ENCODE measurements at regions of chr17 and their contacts with region 1.

Region 1: DNA sequence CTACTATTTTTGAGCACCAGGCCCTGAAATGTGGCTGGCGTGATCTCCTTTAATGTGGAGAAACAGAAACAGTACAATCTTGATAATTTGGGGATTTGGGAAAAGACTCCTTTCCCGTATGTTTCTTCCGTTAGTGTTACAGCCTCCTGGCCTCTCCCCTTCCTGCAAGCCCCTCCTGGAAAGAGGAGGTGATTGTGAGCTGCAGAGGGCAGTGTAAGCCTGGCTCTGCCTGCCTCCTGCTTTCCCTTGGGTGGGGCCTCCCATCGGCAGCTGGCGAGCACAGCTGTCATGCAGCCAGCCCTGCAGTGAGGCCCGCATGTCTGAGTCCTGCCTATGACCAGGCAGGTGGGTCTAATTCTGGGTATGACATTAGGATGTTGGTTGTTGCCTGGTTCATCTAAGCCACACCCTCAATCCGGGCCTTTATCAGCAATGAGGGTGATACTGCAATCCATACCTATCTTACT is 48.7 kb upstream of the WSB1 start:
- DNase-seq: peak; percentile 58 to 73
- H3K4me3 ChIP-seq: no peak overlapping the region
- H3K27ac ChIP-seq: no peak overlapping the region
- H3K4me1 ChIP-seq: peaks cover 0 to 9% (median 2%) of the 10 kb centered on the region in 4 experiments; a peak in 3 of 7 replicates
- H3K27me3 ChIP-seq: no peaks in the 10 kb centered on the region
- CTCF ChIP-seq: peak; percentile 85 to 89 (median 88)
- EP300 ChIP-seq: no peak
- POLR2A ChIP-seq: no peak
- RAD21 ChIP-seq: peak; percentile 95 to 97

Region 2: DNA sequence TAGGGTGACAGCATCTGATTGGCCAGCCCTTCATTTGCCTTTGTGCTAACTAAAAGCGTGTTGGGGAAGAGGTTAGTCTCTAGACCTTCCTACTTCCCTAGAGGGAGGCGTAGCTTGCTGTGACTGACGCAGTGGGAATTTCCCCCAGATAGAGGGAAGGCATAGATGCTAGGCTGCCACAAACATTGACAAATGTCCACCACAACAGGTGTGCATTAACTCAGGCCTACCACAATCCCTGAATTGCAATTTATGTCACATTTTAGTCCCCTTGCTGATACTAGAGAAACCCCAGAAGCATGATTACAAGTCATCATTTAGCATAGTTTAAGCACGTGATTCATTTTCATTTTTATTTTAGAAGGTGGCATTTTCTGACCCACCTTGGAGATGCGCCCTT is 27.6 kb before region 1 on chr17:
- CTCF ChIA-PET with region 1: no interaction called
- POLR2A ChIA-PET with region 1: no interaction called
- DNase-seq: no peak
- H3K4me3 ChIP-seq: no peak overlapping the region
- H3K27ac ChIP-seq: no peak overlapping the region
- H3K4me1 ChIP-seq: no peaks in the 10 kb centered on the region
- H3K27me3 ChIP-seq: no peaks in the 10 kb centered on the region
- CTCF ChIP-seq: no peak
- EP300 ChIP-seq: no peak
- POLR2A ChIP-seq: no peak
- RAD21 ChIP-seq: no peak

Region 3: GRCh38 chr17:27276653-27277156 is 31.4 kb after region 1 on chr17:
- CTCF ChIA-PET with region 1: interaction called, 10 read pairs
- POLR2A ChIA-PET with region 1: no interaction called
- DNase-seq: peak; percentile 50 to 77
- H3K4me3 ChIP-seq: peak overlapping the region in 3 of 4 experiments; percentile 2 to 52 (median 50); a peak in 4 of 8 replicates
- H3K27ac ChIP-seq: peak overlapping the region; percentile 93
- H3K4me1 ChIP-seq: peaks cover 0 to 4% (median 2%) of the 10 kb centered on the region in 4 experiments; a peak in 3 of 7 replicates
- H3K27me3 ChIP-seq: no peaks in the 10 kb centered on the region; a peak in 1 of 7 replicates
- CTCF ChIP-seq: no peak
- EP300 ChIP-seq: no peak
- POLR2A ChIP-seq: peak; percentile 57 to 88
- RAD21 ChIP-seq: no peak

Region 4: DNA sequence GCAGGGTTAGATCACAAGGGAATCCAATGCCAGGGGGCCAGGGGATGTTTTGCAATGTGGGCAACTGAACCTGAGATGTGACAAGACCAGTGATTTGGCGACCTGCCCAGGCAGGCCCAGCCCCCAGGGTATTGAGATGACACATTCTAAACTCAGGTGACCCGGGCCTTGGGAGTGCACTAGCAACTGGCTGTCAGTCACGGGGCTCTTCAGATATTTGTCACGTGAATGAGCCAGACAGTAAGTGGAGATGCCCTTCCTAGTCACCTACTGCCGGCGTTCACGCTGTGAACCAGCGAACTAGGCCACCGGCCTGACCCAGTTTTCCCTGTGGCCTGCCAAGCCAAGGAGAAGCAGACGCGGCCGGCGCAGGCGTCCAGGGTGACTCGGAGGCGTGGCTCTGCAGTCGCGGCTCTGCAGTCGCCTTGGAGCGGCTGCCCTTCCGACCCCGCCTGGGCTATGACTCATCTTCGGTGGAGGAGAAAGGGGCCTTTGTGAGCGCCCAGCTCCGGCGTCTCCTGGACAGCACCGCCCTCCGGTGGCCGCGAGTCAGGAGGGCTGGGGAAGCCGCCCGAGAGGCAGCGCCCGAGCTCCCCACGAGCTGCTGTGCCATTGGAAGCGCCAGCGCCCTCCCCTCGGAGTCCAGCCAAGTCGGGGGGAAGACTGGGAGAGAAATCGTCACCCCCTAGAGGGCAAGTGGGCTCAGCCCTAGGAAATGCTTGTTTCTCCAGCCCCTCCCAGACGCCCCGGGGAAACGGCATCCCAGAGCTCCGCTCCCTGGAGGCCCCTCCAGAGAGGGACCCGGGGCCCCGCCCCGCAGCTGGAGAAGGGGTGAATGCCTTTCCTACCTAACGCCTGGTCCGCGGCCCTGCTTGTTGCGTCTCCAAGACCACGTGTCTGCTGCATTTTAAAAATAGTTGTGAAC is 87.5 kb after region 1 on chr17:
- CTCF ChIA-PET with region 1: interaction called, 12 read pairs
- POLR2A ChIA-PET with region 1: interaction called, 4 read pairs
- DNase-seq: peak; percentile 89 to 95
- H3K4me3 ChIP-seq: peak overlapping the region; percentile 14 to 66 (median 56)
- H3K27ac ChIP-seq: peak overlapping the region; percentile 24; the same call in 1 of the 2 replicates
- H3K4me1 ChIP-seq: peaks cover 0 to 6% (median 5%) of the 10 kb centered on the region in 4 experiments; a peak in 6 of 7 replicates
- H3K27me3 ChIP-seq: no peaks in the 10 kb centered on the region; a peak in 1 of 7 replicates
- CTCF ChIP-seq: peak; percentile 65 to 81 (median 75)
- EP300 ChIP-seq: peak in 1 of 2 experiments; percentile 9; a peak in 1 of 3 replicates
- POLR2A ChIP-seq: peak in 1 of 2 experiments; percentile 55; a peak in 2 of 3 replicates
- RAD21 ChIP-seq: peak; percentile 86 to 92

Region 5: GRCh38 chr17:27345141-27345904 is 100.1 kb after region 1 on chr17:
- CTCF ChIA-PET with region 1: interaction called, 10 read pairs
- POLR2A ChIA-PET with region 1: no interaction called
- DNase-seq: peak; percentile 74 to 81
- H3K4me3 ChIP-seq: peak overlapping the region; percentile 28 to 62 (median 41); a peak in 6 of 8 replicates
- H3K27ac ChIP-seq: peak overlapping the region; percentile 95
- H3K4me1 ChIP-seq: peaks cover 8 to 16% (median 12%) of the 10 kb centered on the region in 4 experiments
- H3K27me3 ChIP-seq: no peaks in the 10 kb centered on the region
- CTCF ChIP-seq: no peak
- EP300 ChIP-seq: peak in 1 of 2 experiments; percentile 67; a peak in 1 of 3 replicates
- POLR2A ChIP-seq: peak; percentile 66 to 94
- RAD21 ChIP-seq: peak in 1 of 2 experiments; percentile 8; a peak in 1 of 4 replicates

Measured in H1 (cell line).